Tibial artery (tissue), 4 donors: ENCODE measurements at regions of chr17 and their contacts with region 1.

Region 1: DNA sequence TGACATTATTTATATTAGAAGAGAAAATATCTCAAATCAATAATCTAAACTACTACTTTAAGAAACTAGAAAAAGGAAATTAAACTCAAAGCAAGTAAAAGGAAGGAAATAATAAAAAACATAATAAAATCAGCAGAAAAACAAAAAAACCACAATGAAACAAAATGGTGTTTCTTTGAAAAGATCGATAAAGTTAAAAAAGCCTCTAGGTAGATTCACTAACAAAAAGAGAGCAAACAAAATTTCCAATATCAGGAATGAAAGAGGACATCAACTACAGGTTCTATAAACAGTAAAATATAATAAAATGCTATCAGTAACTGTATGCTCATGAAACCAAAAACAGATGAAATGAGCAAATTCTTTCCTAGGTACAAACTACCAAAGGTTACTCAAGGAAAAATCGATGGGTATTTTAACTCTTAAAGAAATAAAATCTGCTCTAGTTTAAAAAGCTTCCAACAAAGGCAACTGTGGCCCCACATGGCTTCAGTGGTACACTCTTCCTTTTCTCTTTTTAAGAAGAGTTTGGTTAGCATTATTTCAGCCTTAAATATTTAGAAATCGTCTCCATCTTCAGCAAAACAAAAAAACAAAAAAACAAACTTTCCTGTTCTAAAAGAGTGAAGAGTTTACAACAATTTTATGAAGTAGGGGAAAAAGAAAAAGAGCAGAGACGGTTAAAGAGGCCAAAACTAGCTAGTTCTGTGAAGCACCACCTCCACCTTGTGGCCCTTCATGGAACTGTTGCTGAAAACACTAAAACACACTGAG is 102.2 kb downstream of the TRIM37 start:
- DNase-seq: peak in 1 of 2 donors; percentile 63
- H3K4me3 ChIP-seq: no peak overlapping the region
- H3K27ac ChIP-seq: no peak overlapping the region
- H3K4me1 ChIP-seq: peaks cover 0 to 7% (median 0%) of the 10 kb centered on the region in 4 donors
- H3K27me3 ChIP-seq: no peaks in the 10 kb centered on the region
- CTCF ChIP-seq: peak; percentile 90 to 94

Region 2: GRCh38 chr17:58587702-58588254 is 416.7 kb before region 1 on chr17:
- intact Hi-C with region 1: loop called (anchors 10 kb)
- DNase-seq: peak; percentile 29 to 67
- H3K4me3 ChIP-seq: no peak overlapping the region
- H3K27ac ChIP-seq: no peak overlapping the region
- H3K4me1 ChIP-seq: no peaks in the 10 kb centered on the region
- H3K27me3 ChIP-seq: no peaks in the 10 kb centered on the region
- CTCF ChIP-seq: peak; percentile 72 to 91

Region 3: DNA sequence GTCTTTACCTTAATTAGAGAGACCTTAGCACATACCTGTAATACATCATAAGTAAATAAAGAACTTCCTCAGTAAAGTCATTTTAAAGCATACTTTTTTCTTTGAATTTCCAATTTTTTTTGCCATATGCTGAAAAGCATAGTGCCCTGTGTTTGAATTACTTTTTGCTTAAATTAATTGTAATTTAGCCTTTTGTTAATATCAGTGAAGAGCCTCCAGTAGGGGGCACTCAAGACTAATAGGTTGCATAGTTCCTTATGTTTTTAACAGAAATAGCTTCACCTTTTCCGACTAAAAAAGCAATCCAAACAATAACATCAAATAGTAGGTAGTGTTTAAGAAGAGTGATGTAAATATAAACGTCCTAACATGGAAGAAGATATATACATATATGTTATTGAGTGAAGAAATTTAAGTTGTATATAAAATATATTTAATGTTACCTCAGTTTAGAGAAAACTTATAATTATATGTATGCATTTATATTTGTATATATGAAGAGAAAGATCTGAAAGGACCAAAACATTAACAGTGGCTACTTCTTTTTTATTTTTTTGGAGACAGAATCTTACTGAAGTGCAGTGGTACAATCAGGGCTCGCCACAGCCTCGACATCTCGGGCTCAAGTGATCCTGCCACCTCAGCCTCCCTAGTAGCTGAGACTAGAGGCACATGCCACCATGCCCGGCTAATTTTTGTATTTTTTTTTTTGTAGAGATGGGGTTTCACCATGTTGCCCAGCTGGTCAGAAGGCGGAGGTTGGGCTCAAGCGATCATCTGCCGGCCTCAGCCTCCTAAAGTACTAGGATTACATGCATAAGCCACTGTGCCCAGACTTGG is 293.4 kb before region 1 on chr17:
- intact Hi-C with region 1: loop called (anchors 5 kb)
- DNase-seq: no peak
- H3K4me3 ChIP-seq: no peak overlapping the region
- H3K27ac ChIP-seq: no peak overlapping the region
- H3K4me1 ChIP-seq: no peaks in the 10 kb centered on the region
- H3K27me3 ChIP-seq: no peaks in the 10 kb centered on the region
- CTCF ChIP-seq: peak; percentile 63 to 67

Region 4: GRCh38 chr17:59106463-59107305 is 102.2 kb after region 1 on chr17 and contains the start of gene TRIM37:
- intact Hi-C with region 1: no loop called
- DNase-seq: peak; percentile 93 to 98
- H3K4me3 ChIP-seq: peak within 1 kb of the TSS; percentile 74 to 90
- H3K27ac ChIP-seq: peak within 1 kb of the TSS; percentile 93 to 94
- H3K4me1 ChIP-seq: peaks cover 0 to 38% (median 22%) of the 10 kb centered on the region in 4 donors
- H3K27me3 ChIP-seq: no peaks in the 10 kb centered on the region
- CTCF ChIP-seq: peak in 1 of 2 experiments; percentile 9